ENCODE measurements at regions of chr9 and their contacts with region 1.

Region 1: GRCh38 chr9:36461323-36461722 is 61.3 kb upstream of the RNF38 start:
- DNase-seq: no peak
- H3K4me3 ChIP-seq: no peak overlapping the region
- H3K27ac ChIP-seq: no peak overlapping the region
- H3K4me1 ChIP-seq: peaks cover 7% of the 10 kb centered on the region
- H3K27me3 ChIP-seq: no peaks in the 10 kb centered on the region
- CTCF ChIP-seq: no peak

Region 2: DNA sequence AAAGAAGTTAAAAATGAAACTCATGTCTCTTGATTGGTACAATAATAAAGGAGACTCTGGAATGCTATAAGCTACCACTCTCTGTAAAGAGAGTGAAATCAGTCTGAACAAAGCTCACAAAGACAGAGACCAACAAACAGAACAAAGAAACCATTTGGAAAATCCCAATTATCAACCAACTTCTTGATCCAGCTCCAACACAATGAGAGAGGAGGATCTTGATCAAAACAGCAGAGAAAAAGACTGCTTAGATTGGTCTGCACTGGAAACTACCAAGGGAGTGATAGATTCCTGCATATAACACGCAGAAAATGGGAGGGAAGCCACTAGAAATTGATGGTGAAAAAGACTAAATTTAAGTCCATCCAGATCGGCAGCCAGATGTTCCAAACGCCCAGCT is 38.1 kb before region 1 on chr9:
- CTCF ChIA-PET with region 1: no interaction called
- dilution Hi-C with region 1: no loop called
- in situ Hi-C with region 1: no loop called
- intact Hi-C with region 1: no loop called
- DNase-seq: no peak
- H3K4me3 ChIP-seq: no peak overlapping the region
- H3K27ac ChIP-seq: no peak overlapping the region
- H3K4me1 ChIP-seq: peaks cover 3% of the 10 kb centered on the region
- H3K27me3 ChIP-seq: no peaks in the 10 kb centered on the region
- CTCF ChIP-seq: no peak

Region 3: DNA sequence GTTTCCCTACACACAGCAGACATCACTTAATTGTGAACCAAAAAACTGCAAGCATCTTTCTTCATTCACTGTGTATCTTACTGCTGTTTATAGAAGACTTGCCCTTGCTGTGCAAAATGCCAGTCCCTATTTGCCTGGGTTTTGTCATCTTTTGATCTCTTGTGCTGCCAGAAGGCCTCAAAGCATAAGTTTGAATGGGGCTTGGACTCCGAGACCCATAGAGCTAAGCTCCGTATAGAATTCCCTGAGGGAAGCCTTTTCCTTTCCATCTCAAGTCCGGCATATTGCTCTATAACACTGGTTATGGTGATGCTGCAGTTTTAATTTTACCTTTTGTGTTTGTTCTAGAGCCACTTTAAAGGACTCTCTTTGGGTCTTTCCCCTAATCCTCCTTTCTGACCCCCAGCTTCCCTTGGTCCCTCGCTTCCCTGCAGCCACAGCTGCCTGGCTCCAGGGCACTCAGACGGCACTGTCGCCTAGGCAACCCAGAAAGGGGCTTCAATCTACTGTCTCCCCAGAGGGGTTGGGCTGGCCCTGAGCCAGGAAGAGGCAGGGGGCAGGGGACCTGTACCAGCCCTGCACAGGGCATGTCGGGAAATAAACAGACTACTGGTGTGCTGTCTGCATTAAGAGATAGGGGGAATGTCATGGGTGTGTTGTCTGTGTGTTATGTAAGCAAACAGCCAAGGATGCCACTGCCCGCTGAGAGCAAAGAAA is 38.0 kb after region 1 on chr9:
- CTCF ChIA-PET with region 1: no interaction called
- dilution Hi-C with region 1: loop called (anchors 5 kb)
- in situ Hi-C with region 1: no loop called
- intact Hi-C with region 1: no loop called
- DNase-seq: no peak
- H3K4me3 ChIP-seq: no peak overlapping the region
- H3K27ac ChIP-seq: no peak overlapping the region
- H3K4me1 ChIP-seq: no peaks in the 10 kb centered on the region
- H3K27me3 ChIP-seq: peaks cover 4% of the 10 kb centered on the region
- CTCF ChIP-seq: no peak

Region 4: DNA sequence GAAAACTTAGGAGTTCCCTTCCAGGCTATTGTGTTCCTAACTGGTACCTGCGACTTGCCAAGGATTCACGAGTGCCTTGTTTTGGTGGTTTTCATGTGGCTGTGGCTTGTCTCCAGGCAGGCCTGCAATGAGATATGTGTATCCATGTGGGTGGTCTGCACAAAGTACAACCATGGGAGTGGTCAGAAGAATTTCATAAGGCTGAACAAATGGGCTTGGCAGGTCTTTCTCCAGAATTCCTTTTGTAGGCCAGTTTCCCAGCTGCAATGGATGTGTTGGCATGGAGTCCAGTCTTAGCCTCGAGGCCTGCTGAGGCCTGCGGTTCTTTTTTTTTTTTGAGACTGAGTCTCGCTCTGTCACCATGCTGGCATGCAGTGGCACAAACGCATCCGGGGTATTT is 82.6 kb after region 1 on chr9:
- CTCF ChIA-PET with region 1: no interaction called
- dilution Hi-C with region 1: no loop called
- in situ Hi-C with region 1: loop called in 1 of 2 experiments (anchors 10 kb)
- intact Hi-C with region 1: no loop called
- DNase-seq: peak; percentile 62
- H3K4me3 ChIP-seq: no peak overlapping the region
- H3K27ac ChIP-seq: no peak overlapping the region
- H3K4me1 ChIP-seq: peaks cover 7% of the 10 kb centered on the region
- H3K27me3 ChIP-seq: no peaks in the 10 kb centered on the region
- CTCF ChIP-seq: no peak